GM12878 (cell line): ENCODE measurements at regions of chr12 and their contacts with region 1.

Region 1: DNA sequence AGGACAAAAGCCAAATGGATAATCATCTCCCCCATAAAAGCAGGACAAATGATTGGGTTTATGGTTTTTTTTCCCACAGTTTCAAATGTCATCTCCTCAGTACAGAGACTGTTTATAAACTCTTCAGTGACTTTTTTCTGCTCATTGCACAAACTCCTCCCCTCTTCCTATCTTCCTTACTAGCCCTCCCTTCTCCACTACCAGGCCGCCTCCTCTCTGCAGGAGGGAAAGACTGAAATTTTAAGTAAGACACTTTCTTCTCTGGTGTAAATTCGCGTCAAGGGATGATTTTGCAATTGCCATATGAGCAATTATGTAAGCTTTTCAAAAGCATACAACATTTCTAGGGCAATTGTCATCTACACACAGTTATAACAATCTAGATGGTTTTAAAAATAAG is 37.0 kb downstream of the BTG1 start:
- DNase-seq: no peak
- ATAC-seq: no peak
- H3K4me3 ChIP-seq: no peak overlapping the region
- H3K27ac ChIP-seq: no peak overlapping the region
- H3K4me1 ChIP-seq: peaks cover 3% of the 10 kb centered on the region
- H3K27me3 ChIP-seq: no peaks in the 10 kb centered on the region
- CTCF ChIP-seq: no peak
- EP300 ChIP-seq: no peak
- POLR2A ChIP-seq: no peak
- RAD21 ChIP-seq: no peak

Region 2: DNA sequence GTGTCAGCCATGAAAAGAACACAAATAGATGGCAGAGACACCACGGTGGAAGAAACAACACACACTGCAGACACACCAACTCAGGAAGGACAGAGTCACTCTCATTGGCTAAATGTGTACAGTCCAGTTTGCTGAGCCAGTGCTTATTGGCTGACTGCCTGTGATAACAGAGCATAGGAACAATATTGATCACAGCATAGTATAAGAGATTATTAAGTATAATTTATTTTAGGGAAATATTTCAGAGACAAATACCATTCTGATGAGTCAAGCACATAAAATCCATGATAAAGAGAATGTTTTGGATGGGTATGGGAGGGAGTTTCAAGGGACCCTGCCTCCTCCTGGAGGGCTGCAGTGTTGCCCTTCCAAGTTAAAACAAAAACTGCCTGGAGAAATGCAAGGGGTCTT is 13.9 kb before region 1 on chr12:
- CTCF ChIA-PET with region 1: interaction called, 5 read pairs
- POLR2A ChIA-PET with region 1: interaction called, 7 read pairs
- RAD21 ChIA-PET with region 1: interaction called, 11 read pairs
- SMC1A ChIA-PET with region 1: interaction called, 14 read pairs
- in situ Hi-C with region 1: no loop called
- intact Hi-C with region 1: no loop called
- DNase-seq: no peak
- ATAC-seq: peak; percentile 50
- H3K4me3 ChIP-seq: no peak overlapping the region
- H3K27ac ChIP-seq: no peak overlapping the region
- H3K4me1 ChIP-seq: peaks cover 5% of the 10 kb centered on the region
- H3K27me3 ChIP-seq: no peaks in the 10 kb centered on the region
- CTCF ChIP-seq: no peak
- EP300 ChIP-seq: no peak
- POLR2A ChIP-seq: no peak
- RAD21 ChIP-seq: no peak

Region 3: GRCh38 chr12:92158796-92159439 is 50.3 kb after region 1 on chr12:
- CTCF ChIA-PET with region 1: no interaction called
- POLR2A ChIA-PET with region 1: no interaction called
- RAD21 ChIA-PET with region 1: no interaction called
- SMC1A ChIA-PET with region 1: no interaction called
- in situ Hi-C with region 1: no loop called
- intact Hi-C with region 1: no loop called
- DNase-seq: no peak
- ATAC-seq: peak; percentile 73
- H3K4me3 ChIP-seq: peak overlapping the region; percentile 59
- H3K27ac ChIP-seq: peak overlapping the region; percentile 87
- H3K4me1 ChIP-seq: peaks cover 21% of the 10 kb centered on the region
- H3K27me3 ChIP-seq: no peaks in the 10 kb centered on the region
- CTCF ChIP-seq: no peak
- EP300 ChIP-seq: peak in 1 of 2 experiments; percentile 40; a peak in 1 of 4 replicates
- POLR2A ChIP-seq: no peak
- RAD21 ChIP-seq: no peak

Region 4: GRCh38 chr12:92215358-92215757 is 106.7 kb after region 1 on chr12:
- CTCF ChIA-PET with region 1: no interaction called
- POLR2A ChIA-PET with region 1: no interaction called
- RAD21 ChIA-PET with region 1: no interaction called
- SMC1A ChIA-PET with region 1: no interaction called
- in situ Hi-C with region 1: no loop called
- intact Hi-C with region 1: no loop called
- DNase-seq: no peak
- ATAC-seq: no peak
- H3K4me3 ChIP-seq: no peak overlapping the region
- H3K27ac ChIP-seq: no peak overlapping the region
- H3K4me1 ChIP-seq: no peaks in the 10 kb centered on the region
- H3K27me3 ChIP-seq: no peaks in the 10 kb centered on the region
- CTCF ChIP-seq: no peak
- EP300 ChIP-seq: no peak
- POLR2A ChIP-seq: no peak
- RAD21 ChIP-seq: no peak